ENCODE measurements at regions of chr10 and their contacts with region 1.

Region 1: GRCh38 chr10:92873029-92873428 is 24.7 kb downstream of the EXOC6 start:
- DNase-seq: no peak
- H3K4me3 Mint-ChIP-seq: no peak overlapping the region
- H3K27ac Mint-ChIP-seq: no peak overlapping the region
- H3K4me1 Mint-ChIP-seq: no peaks in the 10 kb centered on the region
- H3K27me3 Mint-ChIP-seq: no peaks in the 10 kb centered on the region
- CTCF ChIP-seq: no peak

Region 2: GRCh38 chr10:92640110-92640509 is 232.9 kb before region 1 on chr10:
- CTCF ChIA-PET with region 1: no interaction called
- POLR2A ChIA-PET with region 1: no interaction called
- intact Hi-C with region 1: loop called (anchors 10 kb)
- DNase-seq: peak; percentile 82
- H3K4me3 Mint-ChIP-seq: no peak overlapping the region
- H3K27ac Mint-ChIP-seq: no peak overlapping the region
- H3K4me1 Mint-ChIP-seq: peaks cover 5% of the 10 kb centered on the region
- H3K27me3 Mint-ChIP-seq: no peaks in the 10 kb centered on the region
- CTCF ChIP-seq: no peak

Region 3: DNA sequence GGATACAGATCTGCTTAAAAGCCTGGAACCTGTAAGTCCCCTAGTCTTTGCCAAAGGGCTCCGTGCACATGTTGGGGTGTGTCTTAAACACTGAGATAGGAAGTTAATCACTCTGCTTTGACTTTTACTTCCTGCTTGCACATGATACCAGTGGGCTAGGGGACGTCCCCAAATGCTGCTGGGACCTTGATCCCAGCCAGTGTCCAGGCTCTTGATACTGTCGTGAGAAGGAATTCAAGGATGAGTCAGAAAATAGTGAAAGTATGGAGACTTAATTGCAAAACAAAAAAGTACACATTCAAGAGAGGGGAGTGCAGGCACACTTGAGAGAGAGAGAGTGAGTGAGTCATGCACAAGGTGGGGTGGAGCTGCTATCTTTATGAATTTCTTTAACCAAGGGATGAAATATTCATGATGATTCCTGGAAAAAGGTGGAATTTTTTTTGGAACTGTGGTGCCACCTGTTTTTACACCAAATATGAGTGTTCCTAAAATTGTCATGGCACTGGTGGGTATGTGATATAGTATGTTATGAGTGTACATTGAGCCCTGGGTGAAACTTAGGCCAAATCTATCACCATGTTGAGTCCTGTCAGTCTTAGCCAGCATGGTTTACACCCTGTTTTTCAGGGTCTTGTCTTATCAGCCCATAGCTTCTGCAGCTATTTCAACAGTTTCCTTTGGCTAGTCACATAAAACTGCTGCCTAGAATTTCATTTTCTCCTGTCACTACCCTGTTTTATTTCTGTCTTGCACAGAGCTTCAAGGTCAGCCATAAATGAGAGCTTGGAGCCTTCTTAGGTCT is 99.2 kb after region 1 on chr10:
- CTCF ChIA-PET with region 1: no interaction called
- POLR2A ChIA-PET with region 1: no interaction called
- intact Hi-C with region 1: no loop called
- DNase-seq: peak; percentile 87
- H3K4me3 Mint-ChIP-seq: peak overlapping the region; percentile 61
- H3K27ac Mint-ChIP-seq: peak overlapping the region; percentile 70
- H3K4me1 Mint-ChIP-seq: peaks cover 16% of the 10 kb centered on the region
- H3K27me3 Mint-ChIP-seq: no peaks in the 10 kb centered on the region
- CTCF ChIP-seq: no peak